CD4-positive, alpha-beta memory T cell (primary cell): ENCODE measurements at regions of chr7 and their contacts with region 1.

Region 1: DNA sequence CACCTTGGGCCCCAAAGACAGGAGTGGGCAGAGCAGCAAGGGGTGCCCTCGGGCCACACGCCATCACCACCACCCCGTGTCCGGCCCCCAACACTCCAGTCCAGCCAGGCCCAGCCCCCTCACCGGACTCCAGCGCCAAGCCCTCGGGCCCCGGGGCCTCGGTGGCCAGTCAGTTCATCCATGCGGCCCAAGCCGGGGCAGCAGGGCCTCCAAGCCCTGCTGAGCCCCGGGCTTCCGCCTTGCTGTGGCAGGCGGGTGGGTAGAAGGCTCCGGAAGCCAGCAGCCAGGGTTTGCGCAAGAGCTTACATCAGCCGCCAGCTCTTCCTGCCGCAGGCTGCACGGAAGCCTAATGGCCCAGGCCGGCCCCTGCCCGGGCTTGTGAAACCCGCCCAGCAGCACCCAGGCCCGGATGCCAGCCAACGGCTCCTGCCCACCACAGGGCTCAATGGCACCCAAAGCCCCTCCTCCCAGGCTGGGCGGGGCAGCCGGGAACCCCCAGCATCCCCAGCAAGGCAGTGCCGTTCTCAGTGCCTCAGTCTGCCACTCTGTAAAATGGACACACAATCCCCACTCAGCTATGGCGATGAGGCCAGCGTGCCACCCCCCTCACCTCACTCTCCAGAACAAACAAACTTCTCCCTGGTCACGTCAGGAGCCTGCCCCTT is 26.5 kb downstream of the TNRC18 start:
- DNase-seq: peak; percentile 92 to 96 (median 95)
- H3K4me3 ChIP-seq: peak overlapping the region; percentile 81 to 85
- H3K4me3 Mint-ChIP-seq: peak overlapping the region; percentile 82 to 93 (median 86)
- H3K27ac ChIP-seq: peak overlapping the region; percentile 90
- H3K27ac Mint-ChIP-seq: peak overlapping the region; percentile 95 to 99 (median 96)
- H3K4me1 ChIP-seq: peaks cover 27% of the 10 kb centered on the region
- H3K4me1 Mint-ChIP-seq: peaks cover 13 to 44% (median 34%) of the 10 kb centered on the region in 4 donors
- H3K27me3 ChIP-seq: no peaks in the 10 kb centered on the region
- H3K27me3 Mint-ChIP-seq: no peaks in the 10 kb centered on the region

Region 2: GRCh38 chr7:5012985-5013384 is 384.1 kb before region 1 on chr7:
- CTCF ChIA-PET with region 1: no interaction called
- POLR2A ChIA-PET with region 1: no interaction called
- intact Hi-C with region 1: no loop called
- DNase-seq: no peak
- H3K4me3 ChIP-seq: no peak overlapping the region
- H3K4me3 Mint-ChIP-seq: no peak overlapping the region
- H3K27ac ChIP-seq: no peak overlapping the region
- H3K27ac Mint-ChIP-seq: peak overlapping the region in 1 of 7 donors; percentile 57
- H3K4me1 ChIP-seq: no peaks in the 10 kb centered on the region
- H3K4me1 Mint-ChIP-seq: peaks cover 0 to 1% (median 0%) of the 10 kb centered on the region in 4 donors
- H3K27me3 ChIP-seq: no peaks in the 10 kb centered on the region
- H3K27me3 Mint-ChIP-seq: no peaks in the 10 kb centered on the region

Region 3: DNA sequence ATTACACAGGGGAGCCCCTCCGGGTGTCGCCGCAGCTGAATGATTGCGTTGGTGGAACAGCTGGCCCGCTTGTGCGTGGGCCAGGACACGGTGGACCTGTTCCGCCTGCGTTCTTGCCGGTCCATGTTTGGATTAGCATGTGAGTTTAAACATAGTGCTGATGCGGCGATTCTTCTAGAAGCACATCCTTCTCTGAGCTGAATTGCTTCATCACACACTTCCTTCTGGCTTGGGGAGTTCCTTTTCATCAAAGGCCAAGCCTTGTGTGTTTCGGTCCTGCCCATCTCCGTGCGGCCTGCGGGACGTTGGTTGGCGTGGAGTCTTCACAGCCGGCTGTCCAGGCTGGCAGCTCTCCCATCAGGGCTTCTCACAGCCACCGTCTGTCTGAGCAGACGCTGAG is 159.8 kb before region 1 on chr7:
- CTCF ChIA-PET with region 1: interaction called, 10 read pairs
- POLR2A ChIA-PET with region 1: no interaction called
- intact Hi-C with region 1: no loop called
- DNase-seq: no peak
- H3K4me3 ChIP-seq: no peak overlapping the region
- H3K4me3 Mint-ChIP-seq: no peak overlapping the region
- H3K27ac ChIP-seq: no peak overlapping the region
- H3K27ac Mint-ChIP-seq: no peak overlapping the region
- H3K4me1 ChIP-seq: peaks cover 13% of the 10 kb centered on the region
- H3K4me1 Mint-ChIP-seq: peaks cover 4 to 12% (median 6%) of the 10 kb centered on the region in 4 donors
- H3K27me3 ChIP-seq: no peaks in the 10 kb centered on the region
- H3K27me3 Mint-ChIP-seq: peaks cover 9 to 10% of the 10 kb centered on the region in 2 donors

Region 4: GRCh38 chr7:5320802-5321396 is 76.2 kb before region 1 on chr7:
- CTCF ChIA-PET with region 1: no interaction called
- POLR2A ChIA-PET with region 1: no interaction called
- intact Hi-C with region 1: no loop called
- DNase-seq: no peak
- H3K4me3 ChIP-seq: no peak overlapping the region
- H3K4me3 Mint-ChIP-seq: no peak overlapping the region
- H3K27ac ChIP-seq: no peak overlapping the region
- H3K27ac Mint-ChIP-seq: peak overlapping the region in 1 of 7 donors; percentile 37
- H3K4me1 ChIP-seq: no peaks in the 10 kb centered on the region
- H3K4me1 Mint-ChIP-seq: no peaks in the 10 kb centered on the region
- H3K27me3 ChIP-seq: no peaks in the 10 kb centered on the region
- H3K27me3 Mint-ChIP-seq: no peaks in the 10 kb centered on the region

Region 5: GRCh38 chr7:5375925-5376324 is 21.2 kb before region 1 on chr7:
- CTCF ChIA-PET with region 1: interaction called, 11 read pairs
- POLR2A ChIA-PET with region 1: interaction called, 10 read pairs
- intact Hi-C with region 1: no loop called
- DNase-seq: peak; percentile 35 to 63 (median 47)
- H3K4me3 ChIP-seq: no peak overlapping the region
- H3K4me3 Mint-ChIP-seq: peak overlapping the region in 7 of 8 donors; percentile 28 to 75 (median 57)
- H3K27ac ChIP-seq: no peak overlapping the region
- H3K27ac Mint-ChIP-seq: peak overlapping the region; percentile 62 to 93 (median 73)
- H3K4me1 ChIP-seq: peaks cover 12% of the 10 kb centered on the region
- H3K4me1 Mint-ChIP-seq: peaks cover 10 to 14% (median 11%) of the 10 kb centered on the region in 4 donors
- H3K27me3 ChIP-seq: no peaks in the 10 kb centered on the region
- H3K27me3 Mint-ChIP-seq: no peaks in the 10 kb centered on the region

Region 6: DNA sequence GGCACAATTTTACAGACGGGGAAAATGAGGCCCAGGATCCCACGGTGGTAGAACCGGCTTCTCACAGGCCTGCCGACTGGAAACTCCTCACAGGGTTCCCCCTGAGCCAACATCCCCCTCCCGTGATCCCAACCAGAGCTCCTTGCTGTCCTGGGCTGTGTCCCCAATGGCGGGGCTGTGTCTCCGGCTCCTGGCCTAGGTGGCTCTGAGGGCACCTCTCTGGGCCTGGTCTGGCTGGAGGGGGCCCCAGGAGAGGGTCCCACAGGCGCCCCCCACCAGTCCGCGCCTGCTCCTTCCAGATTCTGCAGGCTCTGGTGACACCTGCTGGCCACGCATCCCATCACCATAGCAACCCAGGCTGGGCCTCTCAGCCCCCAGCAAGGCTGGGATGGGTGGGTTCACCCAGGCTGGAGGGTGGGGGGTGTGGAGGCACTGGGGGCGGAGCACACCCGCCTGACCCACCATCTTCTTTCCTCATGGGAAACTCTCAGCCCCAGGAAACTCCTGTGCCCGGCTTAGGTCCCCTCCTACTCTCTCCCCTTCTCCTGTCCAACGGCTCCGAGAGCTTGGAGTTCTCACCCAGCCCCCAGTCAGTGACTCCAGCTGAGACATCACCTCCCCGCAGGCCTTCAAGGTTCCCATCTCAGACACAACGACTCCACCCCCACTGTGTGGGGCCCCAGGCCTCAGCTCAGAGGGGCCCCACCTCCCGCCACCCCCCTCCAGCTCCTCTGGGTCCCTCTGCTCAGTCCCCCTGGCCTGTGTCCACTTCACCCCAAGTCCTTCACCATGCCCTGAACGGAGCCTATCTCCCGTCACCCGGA is 53.6 kb after region 1 on chr7:
- CTCF ChIA-PET with region 1: interaction called, 40 read pairs
- POLR2A ChIA-PET with region 1: no interaction called
- intact Hi-C with region 1: no loop called
- DNase-seq: peak in 4 of 5 donors; percentile 16 to 24 (median 23)
- H3K4me3 ChIP-seq: no peak overlapping the region
- H3K4me3 Mint-ChIP-seq: no peak overlapping the region
- H3K27ac ChIP-seq: no peak overlapping the region
- H3K27ac Mint-ChIP-seq: no peak overlapping the region
- H3K4me1 ChIP-seq: no peaks in the 10 kb centered on the region
- H3K4me1 Mint-ChIP-seq: no peaks in the 10 kb centered on the region
- H3K27me3 ChIP-seq: no peaks in the 10 kb centered on the region
- H3K27me3 Mint-ChIP-seq: peaks cover 0 to 2% of the 10 kb centered on the region in 2 donors

Region 7: DNA sequence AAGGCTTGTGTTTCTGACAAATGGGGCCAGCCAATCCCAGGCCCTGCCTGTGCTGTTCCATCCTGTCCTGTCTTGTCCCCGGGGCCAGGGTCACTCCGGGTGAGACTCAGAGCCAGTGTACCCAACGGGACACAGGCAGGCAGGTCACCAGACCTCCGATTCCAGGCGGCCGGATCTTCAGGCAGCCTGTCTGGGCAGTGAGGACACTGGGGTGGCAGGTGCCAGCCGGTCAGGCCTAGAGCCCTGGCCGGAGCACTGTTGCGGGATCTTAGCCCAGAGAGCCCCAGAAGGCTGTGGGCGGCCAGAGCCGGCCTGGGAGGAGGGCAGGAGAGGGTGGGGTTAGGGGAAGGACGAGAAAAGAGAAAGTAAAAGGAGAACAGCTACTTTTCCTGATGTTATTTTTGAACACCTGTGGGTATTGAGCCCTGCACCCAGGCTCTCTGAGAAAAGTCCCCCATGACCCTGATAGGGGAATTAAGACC is 160.8 kb after region 1 on chr7:
- CTCF ChIA-PET with region 1: interaction called, 6 read pairs
- POLR2A ChIA-PET with region 1: interaction called, 11 read pairs
- intact Hi-C with region 1: loop called (anchors 2 kb)
- DNase-seq: no peak
- H3K4me3 ChIP-seq: peak overlapping the region in 1 of 2 donors; percentile 69
- H3K4me3 Mint-ChIP-seq: peak overlapping the region; percentile 61 to 97 (median 86)
- H3K27ac ChIP-seq: peak overlapping the region; percentile 64
- H3K27ac Mint-ChIP-seq: peak overlapping the region; percentile 82 to 97 (median 94)
- H3K4me1 ChIP-seq: peaks cover 52% of the 10 kb centered on the region
- H3K4me1 Mint-ChIP-seq: peaks cover 20 to 58% (median 40%) of the 10 kb centered on the region in 4 donors
- H3K27me3 ChIP-seq: peaks cover under 1% of the 10 kb centered on the region
- H3K27me3 Mint-ChIP-seq: peaks cover 2 to 5% of the 10 kb centered on the region in 2 donors